GM13976 (cell line): ENCODE measurements at regions of chr10 and their contacts with region 1.

Region 1: GRCh38 chr10:17742918-17743317 is 9.1 kb upstream of the TMEM236 start:
- DNase-seq: peak; percentile 52
- CTCF ChIP-seq: peak; percentile 66

Region 2: GRCh38 chr10:17512341-17513001 is 230.4 kb before region 1 on chr10:
- in situ Hi-C with region 1: no loop called
- DNase-seq: no peak
- CTCF ChIP-seq: no peak

Region 3: GRCh38 chr10:17562614-17563013 is 180.3 kb before region 1 on chr10:
- in situ Hi-C with region 1: no loop called
- DNase-seq: no peak
- CTCF ChIP-seq: no peak

Region 4: GRCh38 chr10:17607603-17608332 is 135.2 kb before region 1 on chr10:
- in situ Hi-C with region 1: loop called (anchors 5 kb)
- DNase-seq: peak; percentile 59
- CTCF ChIP-seq: peak; percentile 70

Region 5: GRCh38 chr10:18079665-18080295 is 336.9 kb after region 1 on chr10:
- in situ Hi-C with region 1: no loop called
- DNase-seq: no peak
- CTCF ChIP-seq: no peak